A549 (cell line): ENCODE measurements at regions of chr7 and their contacts with region 1.

Region 1: GRCh38 chr7:106793015-106793975 is 71.8 kb upstream of the PIK3CG start:
- DNase-seq: peak; percentile 25 to 38
- ATAC-seq: peak in 1 of 2 experiments; percentile 39; a peak in 1 of 6 replicates
- H3K4me3 ChIP-seq: no peak overlapping the region
- H3K27ac ChIP-seq: no peak overlapping the region
- H3K4me1 ChIP-seq: no peaks in the 10 kb centered on the region
- CTCF ChIP-seq: peak; percentile 89
- EP300 ChIP-seq: no peak
- POLR2A ChIP-seq: no peak
- RAD21 ChIP-seq: peak; percentile 85 to 89

Region 2: DNA sequence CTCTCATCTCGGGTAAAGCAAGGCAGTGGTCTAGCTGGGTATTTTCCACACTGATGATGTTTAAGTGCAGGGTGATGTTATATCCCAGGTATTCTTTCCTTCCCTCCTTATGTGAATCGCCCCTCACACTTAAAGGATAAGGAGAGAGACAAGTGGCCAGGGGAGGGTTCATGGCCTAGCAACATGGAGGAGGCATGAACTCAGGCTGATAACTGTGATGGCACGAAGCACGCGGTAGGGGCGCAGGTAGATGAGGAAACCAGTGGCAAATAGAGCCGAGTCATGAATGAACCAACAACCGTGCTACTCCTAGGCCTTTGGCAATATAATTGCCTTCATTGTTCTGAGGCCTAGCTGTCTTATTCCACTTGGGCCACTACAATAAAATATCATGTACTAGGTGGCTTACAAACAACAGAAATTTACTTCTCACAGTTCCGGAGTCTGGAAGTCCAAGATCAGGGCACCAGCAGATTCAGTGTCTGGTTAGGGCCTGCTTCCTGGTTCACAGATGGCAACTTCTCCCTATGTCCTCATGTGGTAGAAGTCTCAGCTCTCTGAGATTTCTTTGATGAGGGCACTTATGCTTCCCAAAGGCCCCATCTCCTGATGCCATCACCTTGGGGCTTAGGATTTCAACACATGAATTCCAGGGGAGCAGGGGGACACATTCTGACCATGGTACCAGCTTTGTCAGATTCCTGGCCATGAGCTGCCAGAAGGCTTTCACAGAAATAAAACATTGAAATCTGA is 15.8 kb after region 1 on chr7:
- CTCF ChIA-PET with region 1: interaction called, 17 read pairs
- POLR2A ChIA-PET with region 1: no interaction called
- DNase-seq: no peak
- ATAC-seq: no peak
- H3K4me3 ChIP-seq: no peak overlapping the region
- H3K27ac ChIP-seq: no peak overlapping the region
- H3K4me1 ChIP-seq: no peaks in the 10 kb centered on the region
- CTCF ChIP-seq: no peak
- EP300 ChIP-seq: no peak
- POLR2A ChIP-seq: no peak
- RAD21 ChIP-seq: no peak

Region 3: GRCh38 chr7:106840342-106840741 is 47.0 kb after region 1 on chr7:
- CTCF ChIA-PET with region 1: no interaction called
- POLR2A ChIA-PET with region 1: no interaction called
- DNase-seq: no peak
- ATAC-seq: no peak
- H3K4me3 ChIP-seq: no peak overlapping the region
- H3K27ac ChIP-seq: no peak overlapping the region
- H3K4me1 ChIP-seq: no peaks in the 10 kb centered on the region
- CTCF ChIP-seq: no peak
- EP300 ChIP-seq: no peak
- POLR2A ChIP-seq: no peak
- RAD21 ChIP-seq: no peak

Region 4: DNA sequence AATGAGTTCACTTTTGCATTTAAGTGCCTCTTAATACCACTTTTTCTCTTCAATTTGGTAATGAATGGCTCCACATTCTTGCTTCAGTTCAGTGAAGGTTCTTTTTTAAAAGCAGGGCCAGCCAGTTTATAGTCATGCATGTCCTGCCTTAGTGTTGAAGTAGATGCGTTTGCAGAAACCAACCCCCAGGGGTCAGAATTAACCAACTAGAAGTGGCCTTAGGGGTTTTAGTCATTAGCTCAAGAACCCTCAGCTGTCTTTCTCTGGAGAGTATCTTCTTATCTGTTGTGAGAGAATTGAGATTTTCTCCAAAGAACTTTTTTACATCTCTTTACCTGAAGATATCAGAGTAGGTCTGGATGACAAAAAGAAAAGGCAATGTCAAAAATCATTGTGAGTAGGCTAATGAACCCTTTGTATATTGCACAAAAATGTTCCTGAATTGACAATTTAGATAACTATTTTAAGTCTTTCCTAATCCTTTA is 154.0 kb after region 1 on chr7:
- CTCF ChIA-PET with region 1: interaction called, 12 read pairs
- POLR2A ChIA-PET with region 1: no interaction called
- DNase-seq: peak; percentile 56 to 73
- ATAC-seq: peak; percentile 89 to 94
- H3K4me3 ChIP-seq: no peak overlapping the region
- H3K27ac ChIP-seq: no peak overlapping the region
- H3K4me1 ChIP-seq: no peaks in the 10 kb centered on the region
- CTCF ChIP-seq: peak; percentile 56
- EP300 ChIP-seq: no peak
- POLR2A ChIP-seq: no peak
- RAD21 ChIP-seq: peak; percentile 72 to 76

Region 5: GRCh38 chr7:107007007-107007891 is 214.0 kb after region 1 on chr7:
- CTCF ChIA-PET with region 1: no interaction called
- POLR2A ChIA-PET with region 1: no interaction called
- DNase-seq: no peak
- ATAC-seq: no peak
- H3K4me3 ChIP-seq: no peak overlapping the region
- H3K27ac ChIP-seq: no peak overlapping the region
- H3K4me1 ChIP-seq: no peaks in the 10 kb centered on the region
- CTCF ChIP-seq: no peak
- EP300 ChIP-seq: no peak
- POLR2A ChIP-seq: no peak
- RAD21 ChIP-seq: no peak